T-cell (primary cell): ENCODE measurements at regions of chr16 and their contacts with region 1.

Region 1: GRCh38 chr16:16992975-16993765 is 477.6 kb downstream of the XYLT1 start:
- DNase-seq: peak in 29 of 35 experiments; percentile 1 to 50 (median 17)
- ATAC-seq: peak; percentile 31 to 87 (median 82)
- H3K4me3 ChIP-seq: peak overlapping the region in 1 of 2 donors; percentile 49
- H3K4me3 Mint-ChIP-seq: peak overlapping the region; percentile 50 to 69 (median 65)
- H3K27ac ChIP-seq: no peak overlapping the region
- H3K27ac Mint-ChIP-seq: peak overlapping the region; percentile 89 to 92
- H3K4me1 ChIP-seq: peaks cover 14 to 16% of the 10 kb centered on the region in 2 experiments
- H3K4me1 Mint-ChIP-seq: peaks cover 24 to 28% (median 25%) of the 10 kb centered on the region in 3 donors
- H3K27me3 ChIP-seq: no peaks in the 10 kb centered on the region
- H3K27me3 Mint-ChIP-seq: no peaks in the 10 kb centered on the region

Region 2: DNA sequence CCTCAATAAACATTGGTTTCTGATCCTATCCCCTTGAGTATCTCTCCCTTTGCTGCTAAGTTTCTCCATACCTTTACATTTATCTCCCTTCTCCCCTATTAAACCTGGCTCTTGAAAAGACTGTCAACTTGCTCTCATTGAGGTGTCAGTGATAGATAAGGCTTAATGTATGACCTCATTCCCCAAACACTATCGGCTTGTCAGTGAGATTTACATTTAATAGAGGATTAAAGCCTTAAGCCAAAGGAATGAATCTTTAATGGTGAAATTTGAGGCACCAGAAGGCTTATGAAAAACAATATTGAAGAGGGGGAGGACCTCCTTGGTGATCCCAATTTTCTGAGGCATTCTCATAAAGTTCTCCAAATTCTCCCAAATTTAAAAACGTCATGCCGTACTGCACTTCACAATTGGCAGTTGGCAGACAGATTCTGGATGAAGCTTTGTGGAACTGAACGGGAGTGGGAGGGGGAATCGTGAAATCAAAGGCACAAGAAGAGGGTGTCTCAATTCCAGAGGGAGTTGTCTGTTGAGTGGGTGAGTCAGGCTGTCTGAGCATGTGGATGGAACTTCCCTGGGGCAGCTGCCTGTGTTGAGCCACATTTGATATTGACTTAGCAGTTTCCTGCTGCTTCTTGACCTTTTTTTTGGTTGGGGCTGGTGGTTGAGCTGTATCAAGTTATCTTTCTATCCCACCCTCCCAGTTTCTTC is 135.4 kb before region 1 on chr16:
- CTCF ChIA-PET with region 1: no interaction called
- POLR2A ChIA-PET with region 1: no interaction called
- DNase-seq: no peak
- ATAC-seq: no peak
- H3K4me3 ChIP-seq: no peak overlapping the region
- H3K4me3 Mint-ChIP-seq: no peak overlapping the region
- H3K27ac ChIP-seq: no peak overlapping the region
- H3K27ac Mint-ChIP-seq: no peak overlapping the region
- H3K4me1 ChIP-seq: no peaks in the 10 kb centered on the region
- H3K4me1 Mint-ChIP-seq: no peaks in the 10 kb centered on the region
- H3K27me3 ChIP-seq: peaks cover 3 to 9% of the 10 kb centered on the region in 2 experiments
- H3K27me3 Mint-ChIP-seq: peaks cover 13 to 18% of the 10 kb centered on the region in 2 donors

Region 3: DNA sequence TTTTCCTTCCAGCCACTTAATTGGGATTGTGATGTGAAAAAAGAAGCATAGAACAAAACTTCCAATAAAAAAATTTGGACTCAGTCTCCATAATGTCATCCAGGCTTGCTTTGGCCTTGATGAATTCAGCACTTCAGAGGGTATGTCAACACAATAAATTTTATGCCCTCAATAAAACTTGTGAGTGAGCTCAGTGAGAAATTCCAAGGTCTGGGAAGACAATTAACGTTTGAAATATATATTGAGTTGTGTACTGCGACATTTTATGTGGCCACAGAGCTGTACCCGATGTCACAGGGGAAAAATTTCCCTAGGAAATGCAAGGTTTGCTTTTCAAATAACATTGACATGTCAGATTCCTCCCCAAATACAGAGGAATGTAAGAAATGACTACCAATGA is 19.0 kb before region 1 on chr16:
- CTCF ChIA-PET with region 1: no interaction called
- POLR2A ChIA-PET with region 1: no interaction called
- DNase-seq: no peak
- ATAC-seq: no peak
- H3K4me3 ChIP-seq: no peak overlapping the region
- H3K4me3 Mint-ChIP-seq: no peak overlapping the region
- H3K27ac ChIP-seq: no peak overlapping the region
- H3K27ac Mint-ChIP-seq: no peak overlapping the region
- H3K4me1 ChIP-seq: no peaks in the 10 kb centered on the region
- H3K4me1 Mint-ChIP-seq: no peaks in the 10 kb centered on the region
- H3K27me3 ChIP-seq: no peaks in the 10 kb centered on the region
- H3K27me3 Mint-ChIP-seq: no peaks in the 10 kb centered on the region

Region 4: GRCh38 chr16:17032335-17032734 is 39.2 kb after region 1 on chr16:
- CTCF ChIA-PET with region 1: no interaction called
- POLR2A ChIA-PET with region 1: interaction called, 3 to 12 read pairs
- DNase-seq: no peak
- ATAC-seq: no peak
- H3K4me3 ChIP-seq: no peak overlapping the region
- H3K4me3 Mint-ChIP-seq: no peak overlapping the region
- H3K27ac ChIP-seq: no peak overlapping the region
- H3K27ac Mint-ChIP-seq: no peak overlapping the region
- H3K4me1 ChIP-seq: peaks cover 5 to 16% of the 10 kb centered on the region in 2 experiments
- H3K4me1 Mint-ChIP-seq: peaks cover 7 to 19% (median 10%) of the 10 kb centered on the region in 3 donors
- H3K27me3 ChIP-seq: no peaks in the 10 kb centered on the region
- H3K27me3 Mint-ChIP-seq: no peaks in the 10 kb centered on the region

Region 5: GRCh38 chr16:17070882-17071592 is 77.9 kb after region 1 on chr16:
- CTCF ChIA-PET with region 1: no interaction called
- POLR2A ChIA-PET with region 1: no interaction called
- DNase-seq: peak; percentile 23 to 94 (median 83)
- ATAC-seq: peak; percentile 79 to 93 (median 80)
- H3K4me3 ChIP-seq: peak overlapping the region; percentile 38 to 39
- H3K4me3 Mint-ChIP-seq: peak overlapping the region; percentile 72 to 79 (median 75)
- H3K27ac ChIP-seq: peak overlapping the region; percentile 88
- H3K27ac Mint-ChIP-seq: peak overlapping the region; percentile 88 to 94
- H3K4me1 ChIP-seq: peaks cover 0 to 12% of the 10 kb centered on the region in 2 experiments
- H3K4me1 Mint-ChIP-seq: peaks cover 22 to 27% (median 23%) of the 10 kb centered on the region in 3 donors
- H3K27me3 ChIP-seq: no peaks in the 10 kb centered on the region
- H3K27me3 Mint-ChIP-seq: no peaks in the 10 kb centered on the region

Region 6: GRCh38 chr16:17173281-17173680 is 180.1 kb after region 1 on chr16:
- CTCF ChIA-PET with region 1: no interaction called
- POLR2A ChIA-PET with region 1: interaction called in 1 of 2 experiments, 16 read pairs
- DNase-seq: peak in 13 of 35 experiments; percentile 0 to 42 (median 7)
- ATAC-seq: peak in 2 of 4 experiments; percentile 42 to 45
- H3K4me3 ChIP-seq: no peak overlapping the region
- H3K4me3 Mint-ChIP-seq: no peak overlapping the region
- H3K27ac ChIP-seq: no peak overlapping the region
- H3K27ac Mint-ChIP-seq: no peak overlapping the region
- H3K4me1 ChIP-seq: peaks cover 0 to 6% of the 10 kb centered on the region in 2 experiments
- H3K4me1 Mint-ChIP-seq: peaks cover 15 to 19% (median 18%) of the 10 kb centered on the region in 3 donors
- H3K27me3 ChIP-seq: no peaks in the 10 kb centered on the region
- H3K27me3 Mint-ChIP-seq: no peaks in the 10 kb centered on the region